Dendritic cell treated with granulocyte-macrophage colony-stimulating factor and Interleukin-4, amounts not matched to agents 40 ng/mL and 50 ng/mL, for 4 days (primary cell): ENCODE measurements at regions of chr10 and their contacts with region 1.

Region 1: DNA sequence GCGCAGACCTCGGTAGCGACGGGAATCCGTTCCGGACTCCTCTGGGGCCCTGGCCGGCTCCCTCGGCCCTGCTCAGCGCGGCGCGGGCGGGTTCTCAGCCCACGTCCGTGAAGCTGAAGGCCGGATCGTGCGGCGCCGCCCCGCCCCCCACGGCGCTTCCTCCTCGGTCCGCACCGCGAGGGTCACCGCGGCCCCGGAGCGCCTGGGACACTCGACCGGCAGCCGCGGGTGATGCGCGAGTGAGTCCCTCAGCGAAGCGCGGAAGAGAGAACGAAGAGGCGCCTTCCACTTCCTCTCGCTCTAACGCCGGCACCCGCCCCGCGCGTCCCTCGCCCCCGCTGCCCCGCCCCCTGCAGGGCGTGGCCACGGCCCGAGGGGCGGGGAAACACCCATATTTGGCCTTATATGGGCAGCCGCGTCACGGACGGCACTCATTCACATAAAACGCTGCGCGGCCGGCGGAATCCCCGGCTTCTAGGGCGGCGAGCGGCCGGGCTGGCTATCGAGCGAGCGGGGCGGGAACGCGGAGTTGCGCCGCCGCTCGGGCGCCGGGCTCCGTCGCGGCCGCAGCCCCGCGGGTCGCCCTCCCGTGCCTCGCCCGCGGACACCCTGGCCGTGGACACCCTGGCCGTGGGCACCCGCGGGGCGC is at the start of gene DUSP5:
- H3K4me3 Mint-ChIP-seq: peak within 1 kb of the TSS; percentile 99
- H3K27ac Mint-ChIP-seq: peak within 1 kb of the TSS; percentile 84
- H3K4me1 Mint-ChIP-seq: peaks cover 68% of the 10 kb centered on the region
- H3K27me3 Mint-ChIP-seq: peaks cover 13% of the 10 kb centered on the region

Region 2: GRCh38 chr10:110007701-110008517 is 489.7 kb before region 1 on chr10 and contains the start of gene ADD3:
- intact Hi-C with region 1: loop called (anchors 10 kb)
- H3K4me3 Mint-ChIP-seq: peak within 1 kb of the TSS; percentile 97
- H3K27ac Mint-ChIP-seq: no peak within 1 kb of the TSS
- H3K4me1 Mint-ChIP-seq: peaks cover 32% of the 10 kb centered on the region
- H3K27me3 Mint-ChIP-seq: no peaks in the 10 kb centered on the region

Region 3: DNA sequence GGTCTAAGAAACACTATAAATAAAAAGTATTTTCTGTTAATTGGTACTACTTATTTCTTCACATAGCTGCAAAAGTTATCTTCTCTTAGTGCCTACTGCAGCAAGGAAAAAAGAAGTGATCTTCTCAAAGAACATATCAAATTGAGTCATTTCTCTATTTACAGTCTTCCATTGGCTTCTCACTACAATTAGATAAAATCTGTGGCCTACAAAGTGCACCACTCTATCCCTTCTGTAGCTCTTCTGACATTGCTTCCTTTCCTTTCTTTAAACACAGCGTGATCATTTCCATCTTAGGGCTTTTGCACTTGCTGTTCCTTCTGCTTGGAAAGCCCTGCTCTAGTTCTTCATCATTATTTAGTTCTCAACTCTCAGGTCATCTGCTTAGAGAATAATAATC is 245.4 kb before region 1 on chr10:
- intact Hi-C with region 1: no loop called
- H3K4me3 Mint-ChIP-seq: no peak overlapping the region
- H3K27ac Mint-ChIP-seq: no peak overlapping the region
- H3K4me1 Mint-ChIP-seq: no peaks in the 10 kb centered on the region
- H3K27me3 Mint-ChIP-seq: no peaks in the 10 kb centered on the region

Region 4: GRCh38 chr10:110354322-110354766 is 143.2 kb before region 1 on chr10:
- intact Hi-C with region 1: loop called (anchors 2 kb)
- H3K4me3 Mint-ChIP-seq: no peak overlapping the region
- H3K27ac Mint-ChIP-seq: no peak overlapping the region
- H3K4me1 Mint-ChIP-seq: peaks cover 19% of the 10 kb centered on the region
- H3K27me3 Mint-ChIP-seq: peaks cover 53% of the 10 kb centered on the region

Region 5: DNA sequence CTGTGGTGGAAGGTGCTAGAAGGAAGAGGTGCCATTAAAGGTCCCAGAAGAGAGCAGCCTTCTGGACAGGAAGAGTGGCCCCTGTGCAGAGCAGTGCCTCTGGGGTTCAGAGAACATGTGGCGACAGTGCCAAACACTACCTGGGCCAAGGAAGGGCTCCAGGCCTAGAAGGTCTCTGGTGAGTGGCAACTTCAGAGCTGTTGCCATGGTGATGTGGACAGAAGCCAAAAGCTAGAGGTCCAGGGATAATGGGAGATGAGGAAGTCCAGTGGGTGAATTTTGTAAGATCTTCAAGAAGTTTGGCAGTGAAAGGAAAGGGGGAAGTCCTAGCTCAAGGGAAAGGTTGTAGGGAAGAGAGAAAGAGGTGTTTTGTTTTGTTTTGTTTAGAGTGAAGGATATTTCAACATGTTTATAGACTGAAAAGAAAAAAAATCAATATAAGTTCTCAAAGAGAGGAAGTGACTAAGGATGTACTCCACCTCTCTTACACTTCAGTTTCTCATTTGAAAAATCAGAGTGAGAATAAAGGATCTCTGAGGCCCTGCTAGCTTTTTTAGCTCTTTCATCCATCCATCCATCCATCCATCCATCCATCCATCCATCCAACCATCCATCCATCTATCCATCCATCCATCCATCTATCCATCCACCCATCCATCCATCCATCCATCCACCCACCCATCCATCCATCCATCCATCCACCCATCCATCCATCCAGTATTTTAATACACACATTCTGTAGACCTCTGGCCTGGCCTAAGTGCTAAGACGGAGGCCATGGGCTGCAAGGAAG is 77.0 kb before region 1 on chr10:
- intact Hi-C with region 1: loop called (anchors 5 kb)
- H3K4me3 Mint-ChIP-seq: no peak overlapping the region
- H3K27ac Mint-ChIP-seq: peak overlapping the region; percentile 17
- H3K4me1 Mint-ChIP-seq: peaks cover 68% of the 10 kb centered on the region
- H3K27me3 Mint-ChIP-seq: no peaks in the 10 kb centered on the region

Region 6: DNA sequence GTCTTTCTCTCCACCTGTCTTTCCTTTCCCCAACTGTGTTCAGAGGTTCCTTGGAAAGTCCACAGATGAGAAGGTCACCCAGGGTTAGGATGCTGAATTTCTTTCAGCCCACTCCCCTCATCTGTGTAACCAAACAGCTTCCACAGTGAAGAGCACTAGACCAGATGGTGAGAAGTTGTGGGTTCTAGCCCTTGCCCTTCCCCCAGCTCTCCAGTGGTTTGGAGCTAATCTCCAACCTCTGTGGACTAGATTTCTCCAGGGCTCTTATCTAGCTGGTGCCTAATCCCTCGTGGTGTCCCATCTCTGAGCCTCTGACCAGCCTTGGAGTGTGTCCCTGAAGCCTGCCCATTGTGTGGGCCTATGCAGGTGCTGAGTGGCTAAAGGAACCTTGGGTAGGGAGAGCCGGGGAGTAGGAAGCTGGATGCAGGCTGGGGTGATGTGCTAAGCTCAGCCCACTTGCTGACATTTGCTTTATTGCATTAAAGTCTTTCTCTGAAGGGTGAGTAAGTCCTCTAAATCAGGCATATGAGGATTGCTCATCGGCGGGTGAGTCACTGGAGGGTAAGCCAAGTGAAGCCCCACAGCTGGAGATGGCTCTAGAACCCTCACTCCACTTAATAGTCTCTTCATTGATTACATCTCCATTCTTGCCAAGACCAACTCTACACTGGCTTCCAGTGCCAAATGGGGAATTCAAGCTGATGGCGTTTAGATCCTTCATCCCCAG is 15.1 kb after region 1 on chr10:
- intact Hi-C with region 1: no loop called
- H3K4me3 Mint-ChIP-seq: no peak overlapping the region
- H3K27ac Mint-ChIP-seq: no peak overlapping the region
- H3K4me1 Mint-ChIP-seq: peaks cover 64% of the 10 kb centered on the region
- H3K27me3 Mint-ChIP-seq: peaks cover 3% of the 10 kb centered on the region

Region 7: DNA sequence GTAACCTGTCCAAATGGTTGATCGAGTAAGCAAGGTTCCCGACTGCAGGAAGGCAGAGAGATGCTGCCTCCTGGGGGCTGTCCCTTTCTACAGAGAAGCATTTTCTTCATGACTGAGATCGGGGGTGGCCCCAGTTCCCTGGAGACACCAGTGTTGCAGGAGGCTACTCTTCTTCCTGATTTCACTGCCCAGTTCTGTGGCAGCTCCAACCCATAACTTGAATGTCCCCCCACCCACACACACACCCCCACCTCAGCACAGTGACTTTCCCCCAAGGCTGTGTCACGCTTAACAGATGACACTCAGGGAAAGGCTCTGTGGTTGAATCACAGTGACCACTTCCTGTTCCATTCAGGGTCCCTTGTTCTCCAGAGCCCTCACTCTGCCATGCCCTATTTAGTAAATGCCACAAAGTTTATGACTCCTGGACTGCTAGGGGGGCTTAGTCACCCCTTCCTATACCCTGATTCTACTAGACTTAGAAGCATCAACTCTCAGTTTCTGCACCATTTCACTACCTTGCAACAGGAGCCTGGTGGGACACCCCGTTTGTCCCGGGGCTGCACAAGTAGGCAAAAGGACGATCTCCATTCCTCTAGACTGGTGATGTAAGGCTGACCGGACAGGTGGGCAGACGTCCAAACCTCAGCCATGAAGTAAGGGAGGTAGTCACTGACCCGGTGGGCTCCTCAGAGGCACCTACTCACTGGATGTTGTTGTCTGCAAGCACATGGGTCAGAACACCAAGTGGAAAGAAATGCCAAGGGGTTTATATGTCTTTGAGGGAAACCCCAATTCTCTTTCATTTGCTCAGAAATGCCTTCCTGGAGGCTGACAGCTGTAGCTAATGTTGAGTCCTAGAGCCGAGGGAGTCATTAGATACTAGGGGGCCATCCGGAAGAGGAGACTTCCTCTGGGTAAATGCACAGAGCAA is 38.7 kb after region 1 on chr10:
- intact Hi-C with region 1: loop called (anchors 5 kb)
- H3K4me3 Mint-ChIP-seq: no peak overlapping the region
- H3K27ac Mint-ChIP-seq: peak overlapping the region; percentile 57
- H3K4me1 Mint-ChIP-seq: peaks cover 45% of the 10 kb centered on the region
- H3K27me3 Mint-ChIP-seq: peaks cover 29% of the 10 kb centered on the region

Region 8: GRCh38 chr10:110547139-110547761 is 49.7 kb after region 1 on chr10:
- intact Hi-C with region 1: loop called (anchors 5 kb)
- H3K4me3 Mint-ChIP-seq: no peak overlapping the region
- H3K27ac Mint-ChIP-seq: no peak overlapping the region
- H3K4me1 Mint-ChIP-seq: peaks cover 17% of the 10 kb centered on the region
- H3K27me3 Mint-ChIP-seq: peaks cover 15% of the 10 kb centered on the region

Region 9: GRCh38 chr10:110783509-110784107 is 286.0 kb after region 1 on chr10:
- intact Hi-C with region 1: no loop called
- H3K4me3 Mint-ChIP-seq: no peak overlapping the region
- H3K27ac Mint-ChIP-seq: no peak overlapping the region
- H3K4me1 Mint-ChIP-seq: no peaks in the 10 kb centered on the region
- H3K27me3 Mint-ChIP-seq: peaks cover 2% of the 10 kb centered on the region

Region 10: DNA sequence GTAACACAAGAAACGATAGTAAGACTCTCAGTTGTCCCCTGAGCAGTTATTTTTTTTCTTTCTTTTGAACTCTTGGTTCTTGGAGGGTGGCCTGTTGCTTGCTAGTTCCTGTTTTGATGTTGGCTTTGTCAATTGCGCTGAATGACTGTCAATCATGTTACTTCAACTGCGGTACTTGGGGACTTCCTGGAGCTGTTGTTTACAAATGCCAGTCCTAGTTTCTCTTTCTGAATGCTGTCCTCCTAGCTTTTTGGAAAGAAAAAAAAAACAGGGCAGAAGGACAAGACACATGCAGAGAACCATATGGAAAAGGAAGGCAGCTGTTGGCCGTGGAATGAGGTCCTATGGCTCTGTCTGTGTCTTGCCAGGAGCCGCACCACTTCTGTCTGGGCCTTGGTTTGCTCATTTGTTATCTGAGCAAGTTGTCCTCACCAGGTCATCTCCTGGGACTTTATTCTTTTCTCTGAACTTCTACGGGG is 367.1 kb after region 1 on chr10:
- intact Hi-C with region 1: loop called (anchors 5 kb)
- H3K4me3 Mint-ChIP-seq: peak overlapping the region; percentile 77
- H3K27ac Mint-ChIP-seq: peak overlapping the region; percentile 99
- H3K4me1 Mint-ChIP-seq: peaks cover 79% of the 10 kb centered on the region
- H3K27me3 Mint-ChIP-seq: no peaks in the 10 kb centered on the region